OCI-LY7 (cell line): ENCODE measurements at regions of chr15 and their contacts with region 1.

Region 1: GRCh38 chr15:90482124-90483011 is 47.4 kb upstream of the CRTC3 start:
- DNase-seq: peak; percentile 60
- H3K4me3 ChIP-seq: no peak overlapping the region
- H3K27ac ChIP-seq: no peak overlapping the region
- H3K4me1 ChIP-seq: peaks cover 22% of the 10 kb centered on the region
- CTCF ChIP-seq: peak; percentile 94

Region 2: DNA sequence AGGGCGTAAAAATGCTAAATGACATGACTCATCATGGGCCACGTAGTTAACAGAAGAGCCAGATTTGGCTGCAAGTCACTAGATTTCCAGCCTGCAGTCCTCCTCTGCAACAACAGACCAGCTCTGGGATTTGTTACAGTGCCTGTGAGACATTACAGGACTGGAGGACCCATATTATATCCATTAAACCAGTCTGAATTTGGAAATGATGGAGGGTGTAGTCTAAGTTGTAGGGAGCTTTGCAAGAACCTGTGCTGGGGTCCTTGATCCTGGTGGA is 119.5 kb before region 1 on chr15:
- CTCF ChIA-PET with region 1: interaction called, 6 read pairs
- POLR2A ChIA-PET with region 1: interaction called, 3 read pairs
- intact Hi-C with region 1: loop called (anchors 1 kb)
- DNase-seq: no peak
- H3K4me3 ChIP-seq: no peak overlapping the region
- H3K27ac ChIP-seq: no peak overlapping the region
- H3K4me1 ChIP-seq: peaks cover 5% of the 10 kb centered on the region
- CTCF ChIP-seq: no peak

Region 3: GRCh38 chr15:90387537-90388461 is 94.6 kb before region 1 on chr15 and contains the start of gene IQGAP1:
- CTCF ChIA-PET with region 1: no interaction called
- POLR2A ChIA-PET with region 1: no interaction called
- intact Hi-C with region 1: no loop called
- DNase-seq: peak; percentile 98
- H3K4me3 ChIP-seq: peak within 1 kb of the TSS; percentile 84
- H3K27ac ChIP-seq: peak within 1 kb of the TSS; percentile 71
- H3K4me1 ChIP-seq: peaks cover 27% of the 10 kb centered on the region
- CTCF ChIP-seq: no peak
- total RNA-seq, gene IQGAP1: 98.7 and 147 TPM in 2 replicates

Region 4: GRCh38 chr15:90435652-90436337 is 46.6 kb before region 1 on chr15:
- CTCF ChIA-PET with region 1: no interaction called
- POLR2A ChIA-PET with region 1: no interaction called
- intact Hi-C with region 1: no loop called
- DNase-seq: no peak
- H3K4me3 ChIP-seq: no peak overlapping the region
- H3K27ac ChIP-seq: no peak overlapping the region
- H3K4me1 ChIP-seq: peaks cover 29% of the 10 kb centered on the region
- CTCF ChIP-seq: no peak

Region 5: GRCh38 chr15:90691982-90692773 is 209.8 kb after region 1 on chr15:
- CTCF ChIA-PET with region 1: interaction called, 4 read pairs
- POLR2A ChIA-PET with region 1: no interaction called
- intact Hi-C with region 1: loop called (anchors 10 kb)
- DNase-seq: no peak
- H3K4me3 ChIP-seq: no peak overlapping the region
- H3K27ac ChIP-seq: no peak overlapping the region
- H3K4me1 ChIP-seq: no peaks in the 10 kb centered on the region
- CTCF ChIP-seq: no peak